BJ (cell line): ENCODE measurements at regions of chr14 and their contacts with region 1.

Region 1: DNA sequence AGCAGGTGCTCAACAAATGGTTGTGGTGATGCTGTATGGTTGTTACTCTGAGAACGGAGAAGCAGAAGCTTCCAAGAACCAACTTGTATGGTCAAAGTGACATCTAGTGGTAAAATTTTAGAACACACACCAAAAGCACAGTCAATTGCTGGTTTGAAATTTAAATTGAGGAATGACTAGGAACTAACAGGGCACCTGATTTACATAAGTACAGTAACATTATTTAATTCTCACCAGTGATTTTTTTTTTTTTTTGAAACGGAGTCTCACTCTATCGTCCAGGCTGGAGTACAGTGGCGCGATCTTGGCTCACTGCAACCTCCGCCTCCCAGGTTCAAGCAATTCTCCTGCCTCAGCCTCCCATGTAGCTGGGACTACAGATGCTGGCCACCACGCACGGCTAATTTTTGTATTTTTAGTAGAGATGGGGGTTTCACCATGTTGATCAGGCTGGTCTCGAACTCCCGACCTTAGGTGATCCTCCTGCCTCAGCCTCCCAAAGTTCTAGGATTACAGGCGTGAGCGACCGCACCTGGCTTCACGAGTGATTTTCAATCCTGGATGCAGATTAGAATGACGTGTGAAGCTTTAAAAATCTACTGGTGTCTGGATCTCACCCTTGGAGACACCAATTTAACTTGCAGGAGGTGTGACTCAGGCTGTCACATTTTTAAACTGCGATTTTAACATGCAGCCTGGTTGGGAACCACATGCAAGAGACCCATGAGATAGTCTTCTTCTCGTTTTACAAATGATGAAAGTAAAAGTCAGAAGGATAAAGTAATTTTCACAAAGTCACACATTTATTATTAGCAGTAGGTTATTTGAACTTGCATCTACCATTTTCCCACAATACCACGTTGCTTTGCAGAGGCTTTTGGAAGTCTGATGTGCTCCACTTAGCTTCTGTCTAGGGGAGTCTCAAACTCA is 14.1 kb upstream of the NUMB start:
- DNase-seq: no peak
- H3K4me3 ChIP-seq: no peak overlapping the region
- H3K27me3 ChIP-seq: no peaks in the 10 kb centered on the region
- CTCF ChIP-seq: peak; percentile 65

Region 2: DNA sequence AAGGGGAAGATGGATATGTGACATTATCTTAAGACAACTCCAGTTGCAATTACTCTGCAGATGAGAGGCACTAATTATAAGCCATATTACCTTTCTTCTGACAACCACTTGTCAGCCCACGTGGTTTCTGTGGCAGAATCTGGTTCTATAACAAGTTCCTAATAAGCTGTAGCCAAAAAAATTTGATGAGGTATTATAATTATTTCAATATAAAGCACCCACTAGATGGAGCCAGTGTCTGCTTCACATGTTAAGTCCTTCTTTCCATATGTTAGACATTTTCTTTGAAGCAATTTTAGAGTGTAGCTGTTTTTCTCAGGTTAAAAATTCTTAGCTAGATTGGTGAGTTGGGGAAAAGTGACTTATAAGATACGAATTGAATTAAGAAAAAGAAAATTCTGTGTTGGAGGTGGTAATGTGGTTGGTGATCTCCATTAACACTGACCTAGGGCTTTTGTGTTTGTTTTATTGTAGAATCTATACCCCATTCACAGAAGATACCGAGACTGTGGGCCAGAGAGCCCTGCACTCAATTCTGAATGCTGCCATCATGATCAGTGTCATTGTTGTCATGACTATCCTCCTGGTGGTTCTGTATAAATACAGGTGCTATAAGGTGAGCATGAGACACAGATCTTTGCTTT is 299.2 kb before region 1 on chr14:
- CTCF ChIA-PET with region 1: interaction called, 29 read pairs
- POLR2A ChIA-PET with region 1: no interaction called
- DNase-seq: no peak
- H3K4me3 ChIP-seq: no peak overlapping the region
- H3K27me3 ChIP-seq: no peaks in the 10 kb centered on the region
- CTCF ChIP-seq: peak; percentile 55

Region 3: GRCh38 chr14:73286598-73286997 is 185.9 kb before region 1 on chr14:
- CTCF ChIA-PET with region 1: interaction called, 15 read pairs
- POLR2A ChIA-PET with region 1: no interaction called
- DNase-seq: no peak
- H3K4me3 ChIP-seq: no peak overlapping the region
- H3K27me3 ChIP-seq: no peaks in the 10 kb centered on the region
- CTCF ChIP-seq: no peak

Region 4: GRCh38 chr14:73295198-73295796 is 177.2 kb before region 1 on chr14:
- CTCF ChIA-PET with region 1: interaction called, 110 read pairs
- POLR2A ChIA-PET with region 1: no interaction called
- DNase-seq: no peak
- H3K4me3 ChIP-seq: no peak overlapping the region
- H3K27me3 ChIP-seq: no peaks in the 10 kb centered on the region
- CTCF ChIP-seq: peak; percentile 64

Region 5: DNA sequence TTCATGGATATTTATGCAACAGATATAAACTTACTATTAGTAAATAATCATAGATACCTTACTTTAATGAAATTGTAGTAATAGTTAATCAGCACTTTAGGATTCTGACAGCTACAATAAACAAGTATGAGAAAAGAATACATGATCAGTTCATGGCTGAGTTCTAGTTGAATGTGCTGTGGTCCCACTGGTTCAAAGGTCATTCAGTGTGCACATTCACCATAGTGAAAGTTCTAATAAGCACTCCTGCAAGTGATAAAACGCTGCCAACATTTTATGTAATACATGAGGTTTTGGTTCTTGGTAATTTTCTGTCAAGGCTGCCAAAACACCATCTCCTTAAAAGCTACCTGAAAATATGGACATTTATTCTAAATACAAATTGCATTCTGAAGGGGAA is 106.7 kb before region 1 on chr14:
- CTCF ChIA-PET with region 1: no interaction called
- POLR2A ChIA-PET with region 1: no interaction called
- DNase-seq: no peak
- H3K4me3 ChIP-seq: no peak overlapping the region
- H3K27me3 ChIP-seq: no peaks in the 10 kb centered on the region
- CTCF ChIP-seq: no peak

Region 6: DNA sequence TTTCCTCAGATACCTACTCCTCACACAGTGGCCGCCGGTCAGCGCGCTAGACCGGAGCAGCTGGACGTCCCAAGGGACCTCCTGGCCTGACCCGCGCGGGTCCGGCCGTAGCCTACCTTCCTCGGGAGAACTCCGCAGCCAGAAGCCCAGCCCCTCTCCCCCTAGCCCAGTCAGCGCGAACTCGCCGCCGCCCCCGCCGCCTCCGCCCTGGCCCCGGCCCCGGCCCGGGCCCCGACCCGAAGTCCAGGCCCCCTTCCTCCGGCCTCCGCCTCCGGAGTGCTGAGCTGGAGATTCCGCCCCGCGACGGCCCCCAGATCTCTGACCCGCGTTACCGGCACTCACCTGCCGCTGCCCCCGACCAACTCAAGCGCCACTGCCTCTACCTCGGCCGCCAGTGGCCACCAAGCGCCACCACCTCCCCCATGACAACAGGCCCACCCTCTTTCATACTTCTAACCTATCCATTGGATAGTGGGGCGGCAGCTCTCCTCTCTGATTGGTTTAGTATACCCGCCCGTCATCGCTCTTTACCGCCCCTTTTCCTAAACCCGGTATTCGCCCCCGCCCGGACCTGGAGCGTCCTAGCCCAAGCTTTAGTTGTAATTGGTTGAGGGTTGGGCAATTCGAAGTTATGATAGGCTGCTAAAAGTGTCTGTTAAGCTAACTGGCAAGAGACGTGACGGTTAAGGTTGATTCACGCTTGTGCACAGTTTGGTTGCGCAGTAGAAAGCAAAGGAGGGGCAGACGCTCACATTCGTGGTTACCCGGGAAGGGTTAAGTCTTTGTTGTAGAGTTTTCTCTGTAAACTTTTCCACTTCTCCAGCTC is 14.1 kb before region 1 on chr14 and contains the start of gene NUMB:
- CTCF ChIA-PET with region 1: interaction called, 21 read pairs
- POLR2A ChIA-PET with region 1: interaction called, 3 read pairs
- DNase-seq: peak; percentile 100
- H3K4me3 ChIP-seq: peak within 1 kb of the TSS; percentile 91
- H3K27me3 ChIP-seq: no peaks in the 10 kb centered on the region
- CTCF ChIP-seq: 0 out of 2 replicates have a peak, but pooled peaks have one; percentile 3
- polyA plus RNA-seq, gene NUMB: 102 and 131 TPM in 2 replicates

Region 7: GRCh38 chr14:73491256-73492042 is 19.0 kb after region 1 on chr14:
- CTCF ChIA-PET with region 1: interaction called, 10 read pairs
- POLR2A ChIA-PET with region 1: interaction called, 4 read pairs
- DNase-seq: no peak
- H3K4me3 ChIP-seq: peak overlapping the region; percentile 76
- H3K27me3 ChIP-seq: no peaks in the 10 kb centered on the region
- CTCF ChIP-seq: no peak